HEK293 (cell line): ENCODE measurements at regions of chr12 and their contacts with region 1.

Region 1: GRCh38 chr12:49358483-49359141 is 8.7 kb upstream of the SPATS2 start:
- H3K4me3 ChIP-seq: no peak overlapping the region
- H3K27ac ChIP-seq: no peak overlapping the region
- H3K4me1 ChIP-seq: no peaks in the 10 kb centered on the region
- CTCF ChIP-seq: peak; percentile 78

Region 2: GRCh38 chr12:49225556-49226181 is 132.9 kb before region 1 on chr12:
- CTCF ChIA-PET with region 1: no interaction called
- POLR2A ChIA-PET with region 1: no interaction called
- H3K4me3 ChIP-seq: no peak overlapping the region
- H3K27ac ChIP-seq: no peak overlapping the region
- H3K4me1 ChIP-seq: no peaks in the 10 kb centered on the region
- CTCF ChIP-seq: no peak

Region 3: GRCh38 chr12:49296034-49296835 is 62.4 kb before region 1 on chr12:
- CTCF ChIA-PET with region 1: interaction called, 65 read pairs
- POLR2A ChIA-PET with region 1: no interaction called
- H3K4me3 ChIP-seq: peak overlapping the region; percentile 57
- H3K27ac ChIP-seq: peak overlapping the region; percentile 55; the same call in 1 of the 2 replicates
- H3K4me1 ChIP-seq: peaks cover 8% of the 10 kb centered on the region
- CTCF ChIP-seq: peak; percentile 98

Region 4: GRCh38 chr12:49342066-49342913 is 16.3 kb before region 1 on chr12:
- CTCF ChIA-PET with region 1: interaction called, 96 read pairs
- POLR2A ChIA-PET with region 1: interaction called, 6 read pairs
- H3K4me3 ChIP-seq: peak overlapping the region; percentile 20
- H3K27ac ChIP-seq: peak overlapping the region; percentile 21; the same call in 1 of the 2 replicates
- H3K4me1 ChIP-seq: peaks cover 22% of the 10 kb centered on the region
- CTCF ChIP-seq: peak; percentile 88

Region 5: DNA sequence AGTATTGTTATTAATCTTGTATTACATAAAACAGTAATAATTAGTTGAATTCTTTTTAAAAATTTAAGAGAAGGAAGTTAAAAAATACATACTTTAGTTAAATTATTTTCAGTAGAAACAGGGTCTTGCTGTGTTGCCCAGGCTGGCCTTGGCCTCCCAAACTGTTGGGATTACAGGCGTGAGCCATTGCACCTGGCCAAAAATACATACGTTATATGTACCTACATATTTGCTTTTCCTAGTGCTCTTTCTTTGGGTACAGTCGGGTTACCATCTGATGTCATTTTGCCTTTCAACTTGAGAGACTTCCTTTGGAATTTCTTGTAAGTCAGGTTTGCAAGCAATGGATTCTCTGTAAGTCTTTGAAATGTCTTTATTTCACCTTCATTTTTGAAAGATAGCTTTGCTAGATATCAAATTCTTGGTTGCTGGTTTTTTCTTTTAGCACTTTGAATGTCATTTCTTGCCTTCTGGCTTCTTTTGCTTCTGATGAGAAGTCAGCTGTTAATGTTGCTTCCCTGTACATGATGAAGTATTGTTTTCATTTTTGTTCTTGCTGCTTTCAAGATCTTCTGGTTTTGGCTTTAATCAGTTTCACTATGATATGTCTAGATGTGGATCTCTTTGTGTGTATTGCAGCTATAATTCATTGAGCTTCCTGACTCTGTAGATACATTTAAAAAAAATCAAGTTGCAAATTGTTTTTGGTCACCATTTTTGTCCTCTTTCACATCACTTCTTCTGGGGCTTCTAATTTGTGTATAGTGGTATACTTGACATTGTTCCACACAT is 93.1 kb after region 1 on chr12:
- CTCF ChIA-PET with region 1: interaction called, 10 read pairs
- POLR2A ChIA-PET with region 1: no interaction called
- H3K4me3 ChIP-seq: no peak overlapping the region
- H3K27ac ChIP-seq: no peak overlapping the region
- H3K4me1 ChIP-seq: no peaks in the 10 kb centered on the region
- CTCF ChIP-seq: no peak

Region 6: DNA sequence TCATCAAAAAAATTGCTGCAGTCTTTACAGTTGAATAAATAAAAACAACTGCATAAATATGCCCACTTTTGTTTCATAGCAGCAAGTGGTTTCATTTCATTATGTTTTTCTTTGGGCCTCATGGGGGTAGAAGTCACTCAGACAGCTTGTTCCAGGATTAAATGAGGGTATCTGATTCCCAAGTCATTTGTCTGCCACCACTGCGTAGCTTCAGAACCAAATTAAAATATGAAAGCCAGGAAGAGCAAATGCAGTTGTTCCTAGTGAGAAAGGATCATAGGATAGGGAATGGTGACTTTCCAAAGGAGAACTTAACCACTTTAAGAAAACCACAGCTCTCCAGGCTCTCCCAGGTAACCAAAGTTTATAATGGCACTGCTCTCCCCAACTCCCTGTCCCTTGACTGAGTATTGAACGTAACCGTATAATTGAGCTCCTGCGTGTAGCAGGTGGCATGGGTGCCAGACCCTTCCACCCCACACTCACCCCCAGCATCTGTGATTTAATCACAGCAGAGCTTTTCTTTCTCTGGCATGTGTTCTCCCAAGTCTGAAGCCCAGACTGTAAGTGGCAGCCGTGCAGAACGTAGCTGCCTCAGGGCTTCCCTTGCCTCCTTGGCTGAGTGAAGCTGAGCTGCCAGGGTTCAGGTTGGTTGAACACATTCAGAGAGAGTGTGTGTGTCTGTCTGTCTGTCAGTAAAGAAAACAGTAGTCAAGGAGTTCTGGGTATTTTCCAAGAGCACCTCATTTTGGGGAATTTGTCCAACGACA is 168.9 kb after region 1 on chr12:
- CTCF ChIA-PET with region 1: interaction called, 40 read pairs
- POLR2A ChIA-PET with region 1: no interaction called
- H3K4me3 ChIP-seq: no peak overlapping the region
- H3K27ac ChIP-seq: no peak overlapping the region
- H3K4me1 ChIP-seq: no peaks in the 10 kb centered on the region
- CTCF ChIP-seq: no peak

Region 7: GRCh38 chr12:49580572-49581535 is 222.2 kb after region 1 on chr12:
- CTCF ChIA-PET with region 1: interaction called, 133 read pairs
- POLR2A ChIA-PET with region 1: interaction called, 6 read pairs
- H3K4me3 ChIP-seq: no peak overlapping the region
- H3K27ac ChIP-seq: no peak overlapping the region
- H3K4me1 ChIP-seq: no peaks in the 10 kb centered on the region
- CTCF ChIP-seq: peak; percentile 90

Region 8: GRCh38 chr12:49842519-49843352 is 484.1 kb after region 1 on chr12 and contains the start of gene BCDIN3D:
- CTCF ChIA-PET with region 1: no interaction called
- POLR2A ChIA-PET with region 1: no interaction called
- H3K4me3 ChIP-seq: peak within 1 kb of the TSS; percentile 60
- H3K27ac ChIP-seq: peak within 1 kb of the TSS; percentile 89
- H3K4me1 ChIP-seq: peaks cover 6% of the 10 kb centered on the region; the same call in 1 of the 2 replicates
- CTCF ChIP-seq: no peak